Aorta (tissue), 5 donors: ENCODE measurements at regions of chr2 and their contacts with region 1.

Region 1: DNA sequence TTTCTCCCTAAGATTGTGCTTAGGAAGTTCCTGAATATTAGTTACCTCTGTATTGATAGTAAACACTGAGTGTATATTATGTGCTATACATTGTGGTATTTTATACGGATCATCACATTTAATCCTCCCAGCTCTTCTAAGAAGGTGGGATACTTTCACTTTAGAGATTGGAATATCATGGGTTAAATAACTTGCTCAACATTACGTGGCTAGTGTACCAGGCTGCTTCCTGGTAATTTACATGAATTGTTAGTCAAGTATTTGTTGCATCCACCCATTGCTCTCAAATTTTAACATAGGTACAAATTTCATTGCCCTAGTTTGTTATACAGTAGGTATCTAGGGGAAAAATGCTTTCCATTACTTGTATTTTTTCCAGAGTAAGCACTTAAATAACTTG is 21.4 kb downstream of the FAM98A start:
- DNase-seq: no peak
- ATAC-seq: no peak
- H3K4me3 ChIP-seq: no peak overlapping the region
- H3K27ac ChIP-seq: no peak overlapping the region
- H3K4me1 ChIP-seq: no peaks in the 10 kb centered on the region
- H3K27me3 ChIP-seq: no peaks in the 10 kb centered on the region

Region 2: GRCh38 chr2:33475224-33476130 is 102.2 kb before region 1 on chr2:
- intact Hi-C with region 1: loop called (anchors 5 kb)
- DNase-seq: peak; percentile 86 to 89
- ATAC-seq: peak; percentile 91
- H3K4me3 ChIP-seq: peak overlapping the region; percentile 60 to 100
- H3K27ac ChIP-seq: peak overlapping the region in 1 of 2 donors; percentile 88
- H3K4me1 ChIP-seq: no peaks in the 10 kb centered on the region
- H3K27me3 ChIP-seq: no peaks in the 10 kb centered on the region